Activated CD4-positive, alpha-beta T cell treated with anti-CD3 and anti-CD28 coated beads, Interleukin-2, amount 10 ng/mL, durations not matched to agents 24 days and 14 days (primary cell): ENCODE measurements at regions of chrX and their contacts with region 1.

Region 1: DNA sequence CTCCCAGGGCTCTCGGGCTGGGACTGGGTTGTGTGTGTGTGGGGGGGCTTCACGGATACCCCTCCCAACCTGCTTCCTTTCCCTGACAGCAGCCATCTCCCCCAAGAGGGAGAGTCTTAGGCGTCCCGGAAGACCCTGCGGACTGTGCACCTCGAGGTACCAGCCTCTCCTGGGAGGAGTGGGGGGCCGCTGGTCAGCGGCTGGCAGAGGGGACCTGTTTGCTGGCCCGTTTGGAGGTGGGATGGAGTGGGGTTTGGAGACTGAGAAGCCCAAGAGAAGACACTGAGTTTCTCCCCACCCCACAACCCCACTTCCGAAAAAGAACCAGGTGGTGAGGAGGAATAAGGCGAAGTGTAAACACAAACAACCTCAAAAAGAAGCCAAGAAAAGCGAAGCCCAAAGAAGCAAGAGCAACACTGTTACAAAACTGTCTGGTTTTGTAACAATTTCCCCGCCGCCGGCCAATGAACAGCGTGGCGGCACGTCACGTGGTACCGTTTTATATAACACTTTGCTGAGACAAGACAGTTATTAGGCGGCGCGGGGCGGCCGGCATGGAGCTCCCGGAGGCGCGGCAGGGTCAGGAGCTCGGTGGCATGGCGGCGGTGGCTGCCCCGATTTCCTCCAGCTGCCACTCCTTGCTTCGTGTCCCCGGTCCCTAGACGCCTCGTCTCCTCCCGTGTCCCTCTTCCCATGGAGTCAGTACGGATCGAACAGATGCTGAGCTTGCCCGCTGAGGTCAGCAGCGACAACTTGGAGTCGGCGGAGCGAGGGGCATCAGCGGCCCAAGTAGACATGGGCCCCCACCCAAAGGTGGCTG is at the start of gene LONRF3:
- DNase-seq: peak; percentile 77
- H3K4me3 Mint-ChIP-seq: peak within 1 kb of the TSS; percentile 78
- H3K27ac Mint-ChIP-seq: peak within 1 kb of the TSS; percentile 60
- H3K4me1 Mint-ChIP-seq: peaks cover 12% of the 10 kb centered on the region
- H3K27me3 Mint-ChIP-seq: peaks cover 47% of the 10 kb centered on the region
- total RNA-seq, gene LONRF3: 0.66 and 0.75 TPM in 2 replicates

Region 2: GRCh38 chrX:118839334-118839958 is 134.9 kb before region 1 on chrX:
- intact Hi-C with region 1: loop called (anchors 10 kb)
- DNase-seq: peak; percentile 86
- H3K4me3 Mint-ChIP-seq: peak overlapping the region; percentile 68
- H3K27ac Mint-ChIP-seq: no peak overlapping the region
- H3K4me1 Mint-ChIP-seq: peaks cover 2% of the 10 kb centered on the region
- H3K27me3 Mint-ChIP-seq: peaks cover 14% of the 10 kb centered on the region

Region 3: DNA sequence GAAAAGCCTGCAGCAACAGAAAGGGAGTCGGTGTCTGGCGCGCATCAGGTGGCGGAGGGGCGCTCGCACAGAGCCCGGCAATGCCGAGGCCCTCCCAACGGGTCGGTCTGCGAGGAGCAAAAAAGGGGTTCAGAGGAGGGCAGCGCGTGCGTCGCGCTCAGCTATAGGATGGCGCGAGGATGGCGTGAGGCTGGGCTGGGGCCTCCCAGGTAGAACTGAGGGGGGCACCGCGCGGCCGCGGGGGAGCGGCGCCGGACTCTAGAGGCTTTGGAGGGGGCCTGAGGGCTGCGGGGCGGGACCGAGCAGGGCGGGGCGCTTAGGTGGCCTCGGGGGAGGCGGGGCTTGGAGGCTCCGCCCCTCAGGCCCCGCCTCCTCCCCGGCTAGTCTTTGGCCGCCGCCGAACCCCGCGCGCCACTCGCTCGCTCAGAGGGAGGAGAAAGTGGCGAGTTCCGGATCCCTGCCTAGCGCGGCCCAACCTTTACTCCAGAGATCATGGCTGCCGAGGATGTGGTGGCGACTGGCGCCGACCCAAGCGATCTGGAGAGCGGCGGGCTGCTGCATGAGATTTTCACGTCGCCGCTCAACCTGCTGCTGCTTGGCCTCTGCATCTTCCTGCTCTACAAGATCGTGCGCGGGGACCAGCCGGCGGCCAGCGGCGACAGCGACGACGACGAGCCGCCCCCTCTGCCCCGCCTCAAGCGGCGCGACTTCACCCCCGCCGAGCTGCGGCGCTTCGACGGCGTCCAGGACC is 261.7 kb after region 1 on chrX and contains the start of gene PGRMC1:
- intact Hi-C with region 1: loop called (anchors 5 kb)
- DNase-seq: peak; percentile 94
- H3K4me3 Mint-ChIP-seq: peak within 1 kb of the TSS; percentile 93
- H3K27ac Mint-ChIP-seq: peak within 1 kb of the TSS; percentile 76
- H3K4me1 Mint-ChIP-seq: peaks cover 18% of the 10 kb centered on the region
- H3K27me3 Mint-ChIP-seq: peaks cover 28% of the 10 kb centered on the region
- total RNA-seq, gene PGRMC1: 45.5 TPM in 2 replicates